ENCODE measurements at regions of chr2 and their contacts with region 1.

Region 1: DNA sequence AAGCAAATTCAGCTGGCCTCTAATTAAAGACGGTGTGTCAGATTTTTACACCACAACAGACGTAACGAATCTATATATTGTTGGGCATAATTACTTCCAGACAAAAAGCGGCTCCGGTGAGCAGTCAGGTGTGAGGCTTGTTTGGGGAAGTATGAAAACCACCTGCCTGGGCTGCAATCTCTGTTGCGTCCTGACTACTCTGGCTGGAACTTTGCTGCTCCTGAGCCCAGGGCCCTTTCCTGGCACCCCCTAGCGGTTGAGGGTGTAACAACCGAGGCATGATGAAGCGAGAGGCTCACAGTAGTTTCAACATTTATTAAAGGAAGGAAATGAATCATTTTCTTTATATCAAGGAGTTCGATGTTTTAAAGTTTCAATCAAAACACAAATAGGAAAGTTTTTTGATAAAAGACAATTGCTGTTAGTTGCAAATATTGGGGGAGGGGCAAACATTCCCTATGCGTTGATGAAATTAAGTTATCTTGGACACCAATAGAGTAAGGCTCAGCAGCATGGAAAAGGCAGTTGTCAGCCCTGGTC is 10.6 kb upstream of the ITGB6 start:
- DNase-seq: peak; percentile 81
- ATAC-seq: peak; percentile 98
- H3K4me3 ChIP-seq: no peak overlapping the region
- H3K4me3 Mint-ChIP-seq: no peak overlapping the region
- H3K27ac ChIP-seq: no peak overlapping the region
- H3K27ac Mint-ChIP-seq: no peak overlapping the region
- H3K4me1 ChIP-seq: peaks cover 3 to 8% of the 10 kb centered on the region in 2 donors
- H3K4me1 Mint-ChIP-seq: peaks cover 21% of the 10 kb centered on the region
- H3K27me3 ChIP-seq: no peaks in the 10 kb centered on the region
- H3K27me3 Mint-ChIP-seq: peaks cover 17% of the 10 kb centered on the region
- CTCF ChIP-seq: peak; percentile 96

Region 2: DNA sequence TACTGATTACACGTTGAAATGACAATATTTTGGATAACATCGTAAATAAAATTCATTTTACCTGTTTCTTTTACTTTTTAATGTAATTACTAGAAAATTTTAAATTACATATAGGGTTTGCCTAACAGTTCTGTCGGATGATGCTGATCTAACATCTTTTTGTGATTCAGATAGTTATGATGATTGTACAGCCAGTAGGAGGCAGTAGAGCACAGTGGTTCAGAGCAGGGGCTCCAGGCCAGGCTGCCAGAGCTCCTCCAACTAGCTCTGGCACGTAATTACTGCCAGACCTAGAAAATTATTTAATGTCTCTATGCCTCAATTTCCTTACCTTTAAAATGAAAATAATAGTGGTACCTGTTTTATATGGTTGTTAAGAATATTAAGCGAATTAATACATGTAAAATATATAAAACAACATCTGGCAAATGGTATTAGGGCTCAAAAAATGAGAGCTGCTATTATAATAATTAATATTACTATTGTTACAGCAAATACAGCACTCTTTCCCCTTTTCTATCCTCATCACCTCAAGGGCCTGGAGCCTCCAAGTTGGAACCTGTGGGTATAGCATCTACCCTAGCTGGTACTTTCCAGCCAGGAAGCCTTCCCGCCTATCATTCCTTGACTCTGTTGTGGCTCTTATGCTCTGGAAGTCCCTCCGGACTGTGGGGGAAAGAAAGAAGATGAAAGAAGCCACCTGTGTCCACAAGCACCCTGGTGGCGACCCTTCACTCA is 100.6 kb before region 1 on chr2:
- CTCF ChIA-PET with region 1: interaction called, 24 read pairs
- POLR2A ChIA-PET with region 1: no interaction called
- intact Hi-C with region 1: loop called (anchors 1 kb)
- DNase-seq: peak; percentile 40
- ATAC-seq: peak; percentile 45
- H3K4me3 ChIP-seq: no peak overlapping the region
- H3K4me3 Mint-ChIP-seq: no peak overlapping the region
- H3K27ac ChIP-seq: no peak overlapping the region
- H3K27ac Mint-ChIP-seq: no peak overlapping the region
- H3K4me1 ChIP-seq: no peaks in the 10 kb centered on the region
- H3K4me1 Mint-ChIP-seq: no peaks in the 10 kb centered on the region
- H3K27me3 ChIP-seq: peaks cover 0 to 2% (median 0%) of the 10 kb centered on the region in 4 experiments
- H3K27me3 Mint-ChIP-seq: peaks cover 31% of the 10 kb centered on the region
- CTCF ChIP-seq: peak; percentile 64

Region 3: GRCh38 chr2:160561551-160562295 is 351.1 kb after region 1 on chr2:
- CTCF ChIA-PET with region 1: no interaction called
- POLR2A ChIA-PET with region 1: no interaction called
- intact Hi-C with region 1: no loop called
- DNase-seq: no peak
- ATAC-seq: no peak
- H3K4me3 ChIP-seq: no peak overlapping the region
- H3K4me3 Mint-ChIP-seq: no peak overlapping the region
- H3K27ac ChIP-seq: no peak overlapping the region
- H3K27ac Mint-ChIP-seq: no peak overlapping the region
- H3K4me1 ChIP-seq: no peaks in the 10 kb centered on the region
- H3K4me1 Mint-ChIP-seq: no peaks in the 10 kb centered on the region
- H3K27me3 ChIP-seq: no peaks in the 10 kb centered on the region
- H3K27me3 Mint-ChIP-seq: peaks cover 12% of the 10 kb centered on the region
- CTCF ChIP-seq: no peak